PC-3 (cell line): ENCODE measurements at regions of chr12 and their contacts with region 1.

Region 1: GRCh38 chr12:66693901-66694675 is 15.2 kb upstream of the GRIP1 start:
- DNase-seq: peak; percentile 89
- ATAC-seq: peak; percentile 93
- H3K4me3 ChIP-seq: no peak overlapping the region
- H3K27ac ChIP-seq: no peak overlapping the region
- H3K4me1 ChIP-seq: no peaks in the 10 kb centered on the region
- H3K27me3 ChIP-seq: peaks cover 7% of the 10 kb centered on the region; the same call in 1 of the 2 replicates
- CTCF ChIP-seq: peak; percentile 83

Region 2: DNA sequence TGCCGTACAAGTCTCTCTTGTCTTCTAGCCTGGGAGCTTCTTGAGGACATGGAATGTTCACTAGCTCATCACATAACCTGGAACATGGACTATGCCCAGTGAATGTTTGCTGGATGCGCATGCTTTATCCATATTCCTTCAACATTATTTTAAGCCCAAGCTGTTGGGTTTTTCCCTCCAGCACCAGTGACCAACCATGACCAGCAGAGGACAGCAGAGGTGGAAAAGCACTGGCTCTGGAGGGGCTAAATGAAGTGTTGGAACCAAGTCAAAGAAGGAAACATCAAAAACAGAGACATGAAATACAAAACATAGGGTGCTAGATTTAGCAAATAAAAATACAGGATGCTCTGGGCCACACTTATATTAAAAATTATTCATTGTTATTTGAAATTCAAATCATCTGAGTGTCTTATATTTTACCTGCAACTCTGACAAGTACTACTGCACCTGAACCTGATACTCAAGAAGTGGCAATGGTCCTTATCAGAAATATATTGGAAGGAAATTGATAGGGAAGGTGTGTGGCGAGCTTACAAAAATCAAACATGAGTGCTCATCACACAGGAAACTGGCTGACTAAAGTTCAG is 414.9 kb before region 1 on chr12:
- CTCF ChIA-PET with region 1: no interaction called
- POLR2A ChIA-PET with region 1: no interaction called
- intact Hi-C with region 1: loop called (anchors 1 kb)
- DNase-seq: peak; percentile 41
- ATAC-seq: no peak
- H3K4me3 ChIP-seq: no peak overlapping the region
- H3K27ac ChIP-seq: no peak overlapping the region
- H3K4me1 ChIP-seq: no peaks in the 10 kb centered on the region
- H3K27me3 ChIP-seq: peaks cover 23% of the 10 kb centered on the region
- CTCF ChIP-seq: peak; percentile 80

Region 3: GRCh38 chr12:66351301-66351700 is 342.8 kb before region 1 on chr12:
- CTCF ChIA-PET with region 1: interaction called, 3 read pairs
- POLR2A ChIA-PET with region 1: no interaction called
- intact Hi-C with region 1: loop called (anchors 1 kb)
- DNase-seq: no peak
- ATAC-seq: no peak
- H3K4me3 ChIP-seq: no peak overlapping the region
- H3K27ac ChIP-seq: no peak overlapping the region
- H3K4me1 ChIP-seq: no peaks in the 10 kb centered on the region
- H3K27me3 ChIP-seq: no peaks in the 10 kb centered on the region
- CTCF ChIP-seq: no peak

Region 4: GRCh38 chr12:66423266-66423665 is 270.8 kb before region 1 on chr12:
- CTCF ChIA-PET with region 1: no interaction called
- POLR2A ChIA-PET with region 1: no interaction called
- intact Hi-C with region 1: loop called (anchors 10 kb)
- DNase-seq: no peak
- ATAC-seq: no peak
- H3K4me3 ChIP-seq: no peak overlapping the region
- H3K27ac ChIP-seq: no peak overlapping the region
- H3K4me1 ChIP-seq: no peaks in the 10 kb centered on the region
- H3K27me3 ChIP-seq: no peaks in the 10 kb centered on the region
- CTCF ChIP-seq: no peak

Region 5: DNA sequence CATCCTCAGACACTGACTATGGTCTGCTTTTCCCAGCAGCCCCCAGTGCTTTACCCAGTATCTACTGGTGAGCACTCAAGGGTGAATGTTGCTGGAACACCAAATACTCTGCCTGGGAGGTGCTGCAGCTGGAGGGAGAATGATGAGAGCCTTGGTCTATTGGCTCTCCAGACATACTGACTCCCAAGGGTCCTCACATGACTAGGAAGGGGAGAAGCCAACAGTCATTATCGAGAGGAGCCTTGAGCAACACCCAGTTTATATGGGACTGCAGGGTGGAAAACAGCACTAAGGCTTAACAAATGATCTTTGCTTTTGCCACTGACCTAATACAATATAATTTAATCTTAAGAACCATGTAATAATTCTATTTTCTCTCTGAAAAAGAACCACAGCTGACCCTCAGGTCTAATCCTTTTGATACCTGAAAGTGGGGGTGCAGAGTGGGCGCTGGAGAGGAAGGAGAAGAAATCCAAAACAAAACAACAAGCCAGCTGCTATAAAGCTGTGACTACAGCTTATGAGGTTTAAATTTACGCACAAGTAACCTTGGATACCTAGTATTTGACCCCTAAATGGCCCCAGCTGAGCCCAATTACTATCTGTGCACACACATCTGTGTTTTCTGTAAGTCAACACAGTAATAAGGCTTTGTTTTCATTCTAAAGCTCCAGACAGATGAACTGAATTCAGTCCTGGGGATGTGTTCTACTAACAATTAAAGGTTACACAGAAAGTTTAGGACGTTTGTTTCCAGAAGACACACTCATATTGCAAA is 92.6 kb after region 1 on chr12:
- CTCF ChIA-PET with region 1: no interaction called
- POLR2A ChIA-PET with region 1: no interaction called
- intact Hi-C with region 1: no loop called
- DNase-seq: no peak
- ATAC-seq: no peak
- H3K4me3 ChIP-seq: no peak overlapping the region
- H3K27ac ChIP-seq: no peak overlapping the region
- H3K4me1 ChIP-seq: no peaks in the 10 kb centered on the region
- H3K27me3 ChIP-seq: no peaks in the 10 kb centered on the region
- CTCF ChIP-seq: no peak

Region 6: DNA sequence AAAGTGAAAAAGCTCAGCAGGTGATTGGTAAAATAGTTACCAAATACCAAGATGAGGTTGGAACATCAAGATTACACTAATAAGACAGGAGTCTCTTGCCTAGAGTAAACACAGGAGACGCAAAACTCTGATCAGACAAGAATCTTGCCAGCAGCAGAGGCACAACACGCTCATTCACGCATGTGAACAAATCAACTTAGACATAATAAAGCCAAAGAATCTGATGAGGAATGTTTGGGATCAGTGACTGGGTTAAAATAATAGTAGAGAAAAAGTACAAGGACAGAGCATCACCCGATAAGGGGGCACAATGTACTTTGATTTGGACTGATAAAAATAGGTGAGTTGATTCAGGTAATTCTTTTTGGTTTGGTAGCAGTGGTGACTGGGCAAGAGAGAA is 144.3 kb after region 1 on chr12:
- CTCF ChIA-PET with region 1: no interaction called
- POLR2A ChIA-PET with region 1: no interaction called
- intact Hi-C with region 1: no loop called
- DNase-seq: no peak
- ATAC-seq: no peak
- H3K4me3 ChIP-seq: no peak overlapping the region
- H3K27ac ChIP-seq: no peak overlapping the region
- H3K4me1 ChIP-seq: no peaks in the 10 kb centered on the region
- H3K27me3 ChIP-seq: no peaks in the 10 kb centered on the region
- CTCF ChIP-seq: no peak